ENCODE measurements at regions of chr4 and their contacts with region 1.

Region 1: DNA sequence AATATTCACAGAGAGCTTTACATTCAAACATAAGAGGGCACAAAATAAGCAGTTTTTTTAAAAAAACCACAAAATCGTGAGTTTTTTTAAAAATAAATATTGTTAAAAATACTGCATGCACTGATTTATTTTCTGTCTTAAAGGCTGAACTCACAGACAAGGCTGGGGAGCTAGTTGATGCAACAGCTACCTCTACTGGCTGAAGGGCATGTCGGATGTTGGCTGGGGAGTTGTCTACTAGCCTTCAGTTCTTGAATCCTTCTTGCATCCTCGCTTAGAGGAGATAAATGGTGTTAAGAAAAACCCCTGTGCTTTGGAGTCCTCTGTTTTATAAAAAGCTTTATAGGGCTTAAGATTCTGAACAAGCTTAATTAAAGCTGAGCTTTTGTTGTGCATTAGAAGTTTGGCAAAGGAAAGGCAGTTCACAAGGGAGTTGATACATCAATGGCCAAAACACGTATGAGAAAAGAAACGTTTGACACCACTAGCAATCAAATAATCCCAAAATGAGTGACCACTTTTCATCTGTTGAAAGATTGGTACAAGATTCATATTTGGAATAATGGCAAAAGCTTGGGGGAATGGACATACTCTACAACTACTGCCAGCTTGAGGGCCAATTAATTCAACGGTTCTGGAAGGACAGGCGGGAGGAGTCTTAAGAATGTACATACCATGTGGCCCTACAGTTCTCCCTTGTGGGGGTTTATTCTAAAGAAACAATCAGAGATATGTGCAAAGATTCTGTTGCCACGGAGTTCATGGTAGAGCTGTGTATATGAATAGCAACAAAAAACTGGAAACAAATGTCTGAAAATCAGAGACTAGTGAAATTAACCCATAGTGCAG is 94.7 kb downstream of the SEL1L3 start:
- DNase-seq: no peak
- H3K4me3 ChIP-seq: no peak overlapping the region
- H3K27ac ChIP-seq: no peak overlapping the region
- H3K4me1 ChIP-seq: no peaks in the 10 kb centered on the region
- H3K27me3 ChIP-seq: no peaks in the 10 kb centered on the region
- CTCF ChIP-seq: peak in 5 of 6 experiments; percentile 63 to 84 (median 70)
- POLR2A ChIP-seq: no peak

Region 2: GRCh38 chr4:25439918-25440477 is 328.1 kb before region 1 on chr4:
- intact Hi-C with region 1: loop called (anchors 2 kb)
- DNase-seq: no peak
- H3K4me3 ChIP-seq: no peak overlapping the region
- H3K27ac ChIP-seq: no peak overlapping the region
- H3K4me1 ChIP-seq: peaks cover 0 to 6% (median 0%) of the 10 kb centered on the region in 3 donors
- H3K27me3 ChIP-seq: no peaks in the 10 kb centered on the region
- CTCF ChIP-seq: peak; percentile 35 to 90 (median 80)
- POLR2A ChIP-seq: no peak